CD4-positive, alpha-beta memory T cell (primary cell): ENCODE measurements at regions of chrX and their contacts with region 1.

Region 1: DNA sequence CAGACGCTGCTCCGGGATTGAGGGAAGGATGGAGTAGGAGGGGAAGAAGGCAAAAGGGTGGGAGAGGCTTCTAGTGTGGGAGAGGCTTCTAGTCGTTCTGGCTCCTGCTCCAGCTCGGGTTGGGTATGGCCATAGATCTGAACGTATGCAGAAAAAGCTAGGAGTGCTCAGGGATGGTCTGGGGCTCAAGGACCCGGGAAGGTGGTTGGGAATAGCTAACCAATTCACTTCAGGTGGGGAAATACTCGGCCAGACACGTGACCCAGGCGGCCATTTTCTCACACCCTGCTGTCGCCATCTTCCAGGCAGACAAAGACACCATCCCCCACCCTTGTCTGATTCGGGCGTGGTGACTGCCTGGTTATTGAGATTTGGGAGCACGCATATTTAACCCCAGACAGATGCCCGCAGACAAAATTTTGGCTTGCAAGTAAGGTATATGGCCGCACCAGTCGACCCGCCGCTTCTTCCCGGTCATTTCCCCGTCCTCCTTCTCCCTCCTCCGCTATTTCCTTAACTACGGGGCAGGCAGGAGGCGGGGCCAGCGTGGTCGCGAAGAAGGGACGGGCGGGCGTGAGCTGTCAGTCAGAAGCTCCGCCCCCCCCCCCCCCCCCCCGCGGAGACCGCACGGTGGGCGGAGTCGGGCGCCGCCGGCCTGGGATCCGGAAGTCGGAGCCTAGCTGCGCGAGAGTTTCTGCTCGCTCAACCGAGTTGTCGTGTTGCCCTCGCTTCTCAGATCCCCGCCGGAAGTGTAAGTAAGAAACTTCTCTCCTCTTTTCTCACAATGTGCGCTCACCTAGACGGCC is at the start of gene GNL3L:
- DNase-seq: peak; percentile 79 to 84 (median 82)
- H3K4me3 ChIP-seq: peak within 1 kb of the TSS; percentile 88 to 97
- H3K4me3 Mint-ChIP-seq: peak within 1 kb of the TSS; percentile 91 to 99 (median 95)
- H3K27ac ChIP-seq: peak within 1 kb of the TSS; percentile 73
- H3K27ac Mint-ChIP-seq: peak within 1 kb of the TSS; percentile 91 to 98 (median 96)
- H3K4me1 ChIP-seq: peaks cover 34% of the 10 kb centered on the region
- H3K4me1 Mint-ChIP-seq: peaks cover 19 to 45% (median 30%) of the 10 kb centered on the region in 4 donors
- H3K27me3 ChIP-seq: no peaks in the 10 kb centered on the region
- H3K27me3 Mint-ChIP-seq: no peaks in the 10 kb centered on the region
- total RNA-seq, gene GNL3L: 41.7 to 45.1 TPM

Region 2: DNA sequence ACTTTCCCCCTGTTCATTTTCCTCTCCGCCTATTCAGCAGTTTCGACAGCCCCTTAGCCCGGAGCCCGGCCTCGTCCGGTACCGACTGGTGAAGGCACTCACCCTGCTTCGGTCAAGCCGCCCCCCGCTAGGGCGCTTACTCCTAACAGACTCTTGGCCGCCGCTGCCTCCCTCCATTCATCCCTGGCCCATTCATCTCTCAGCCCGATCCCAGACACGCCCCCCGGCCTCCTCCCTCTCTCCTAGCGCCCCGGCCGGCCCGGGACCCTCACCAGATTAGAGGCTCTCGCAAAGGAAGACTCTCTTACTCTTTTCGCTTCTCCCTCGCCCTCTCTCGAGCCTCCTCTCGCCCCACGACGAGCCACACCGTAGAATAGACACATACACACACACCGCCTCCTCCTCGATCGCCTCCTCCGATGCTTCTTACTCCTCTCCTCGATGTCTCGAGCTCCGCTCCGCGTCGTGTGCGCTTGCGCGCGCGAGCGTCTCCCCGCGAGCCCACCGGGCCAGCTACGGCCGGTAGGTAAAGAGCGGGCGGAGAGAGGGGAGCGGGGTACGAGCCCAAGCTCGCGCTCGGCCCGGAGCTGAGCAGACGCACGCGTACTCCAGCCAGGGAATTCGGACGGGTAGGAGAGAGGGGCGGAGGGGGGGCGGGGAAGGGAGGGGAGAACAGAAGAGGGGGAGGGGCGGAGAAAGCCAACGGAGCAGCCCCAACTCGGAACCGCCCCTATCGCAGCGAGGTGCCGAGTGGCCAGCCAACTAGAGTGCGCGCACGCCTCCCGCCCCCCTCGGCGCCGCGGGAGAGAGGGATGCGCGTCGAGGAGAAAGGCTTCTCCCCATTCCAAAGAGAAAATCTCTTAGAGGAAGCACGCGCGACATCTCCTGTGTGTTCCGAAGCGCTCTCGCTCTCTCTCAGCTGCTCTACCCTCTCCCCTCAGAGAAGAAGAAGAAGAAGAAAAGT is 172.1 kb before region 1 on chrX and contains the start of gene WNK3:
- CTCF ChIA-PET with region 1: no interaction called
- POLR2A ChIA-PET with region 1: interaction called, 4 read pairs
- intact Hi-C with region 1: loop called (anchors 5 kb)
- DNase-seq: peak; percentile 23 to 36 (median 25)
- H3K4me3 ChIP-seq: peak within 1 kb of the TSS in 1 of 2 donors; percentile 28
- H3K4me3 Mint-ChIP-seq: peak within 1 kb of the TSS; percentile 70 to 89 (median 86)
- H3K27ac ChIP-seq: no peak within 1 kb of the TSS
- H3K27ac Mint-ChIP-seq: peak within 1 kb of the TSS in 6 of 7 donors; percentile 11 to 82 (median 48)
- H3K4me1 ChIP-seq: peaks cover 5% of the 10 kb centered on the region
- H3K4me1 Mint-ChIP-seq: peaks cover 6 to 16% (median 12%) of the 10 kb centered on the region in 4 donors
- H3K27me3 ChIP-seq: no peaks in the 10 kb centered on the region
- H3K27me3 Mint-ChIP-seq: peaks cover 7 to 19% of the 10 kb centered on the region in 2 donors
- total RNA-seq, gene WNK3: 0.64 to 0.81 TPM

Region 3: DNA sequence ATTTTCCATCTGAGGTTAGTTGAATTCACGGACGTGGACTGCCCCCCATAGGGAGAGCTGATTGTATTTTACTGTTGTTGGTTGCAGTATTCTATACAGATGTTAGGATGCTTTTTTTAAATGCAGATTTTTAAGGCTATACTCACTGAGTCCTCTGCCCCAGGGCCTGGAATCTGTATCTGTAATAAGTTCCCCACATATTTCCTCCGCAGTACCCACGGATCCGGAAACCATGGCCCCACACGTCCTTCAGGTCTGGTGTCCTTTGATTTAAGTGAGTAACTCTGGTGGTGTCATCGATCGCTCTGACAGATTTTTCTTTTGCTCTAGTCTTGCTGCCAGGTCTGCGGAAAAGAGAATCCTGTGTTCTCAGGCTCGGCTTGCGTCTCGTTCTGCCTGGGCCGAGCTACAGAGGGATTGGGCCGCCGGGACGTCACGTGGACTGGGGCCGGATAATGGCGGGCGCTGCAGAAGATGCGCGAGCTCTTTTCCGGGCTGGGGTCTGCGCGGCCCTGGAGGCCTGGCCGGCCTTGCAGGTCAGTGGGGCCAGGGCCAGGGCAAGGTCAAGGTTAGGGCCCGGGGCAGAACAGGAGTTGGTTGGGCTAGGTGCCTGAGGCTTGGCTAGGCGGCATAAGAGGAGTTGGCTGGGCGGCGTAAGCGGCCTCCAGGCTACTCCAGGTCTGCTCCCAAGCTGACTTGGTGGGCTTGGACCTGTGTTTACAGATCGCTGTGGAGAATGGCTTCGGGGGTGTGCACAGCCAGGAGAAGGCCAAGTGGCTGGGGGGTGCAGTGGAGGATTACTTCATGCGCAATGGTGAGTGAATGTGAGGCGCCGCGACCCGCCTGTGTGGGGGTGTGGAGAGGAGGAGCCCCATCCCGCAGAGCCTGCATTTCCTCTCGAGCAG is 89.5 kb before region 1 on chrX and contains the start of gene TSR2:
- CTCF ChIA-PET with region 1: interaction called, 3 read pairs
- POLR2A ChIA-PET with region 1: interaction called, 13 read pairs
- intact Hi-C with region 1: loop called (anchors 1 kb)
- DNase-seq: peak; percentile 76 to 88 (median 80)
- H3K4me3 ChIP-seq: peak within 1 kb of the TSS; percentile 69 to 81
- H3K4me3 Mint-ChIP-seq: peak within 1 kb of the TSS; percentile 86 to 97 (median 93)
- H3K27ac ChIP-seq: peak within 1 kb of the TSS; percentile 75
- H3K27ac Mint-ChIP-seq: peak within 1 kb of the TSS; percentile 84 to 92 (median 90)
- H3K4me1 ChIP-seq: peaks cover 26% of the 10 kb centered on the region
- H3K4me1 Mint-ChIP-seq: peaks cover 15 to 35% (median 25%) of the 10 kb centered on the region in 4 donors
- H3K27me3 ChIP-seq: no peaks in the 10 kb centered on the region
- H3K27me3 Mint-ChIP-seq: no peaks in the 10 kb centered on the region
- total RNA-seq, gene TSR2: 39.2 to 42.1 TPM

Region 4: DNA sequence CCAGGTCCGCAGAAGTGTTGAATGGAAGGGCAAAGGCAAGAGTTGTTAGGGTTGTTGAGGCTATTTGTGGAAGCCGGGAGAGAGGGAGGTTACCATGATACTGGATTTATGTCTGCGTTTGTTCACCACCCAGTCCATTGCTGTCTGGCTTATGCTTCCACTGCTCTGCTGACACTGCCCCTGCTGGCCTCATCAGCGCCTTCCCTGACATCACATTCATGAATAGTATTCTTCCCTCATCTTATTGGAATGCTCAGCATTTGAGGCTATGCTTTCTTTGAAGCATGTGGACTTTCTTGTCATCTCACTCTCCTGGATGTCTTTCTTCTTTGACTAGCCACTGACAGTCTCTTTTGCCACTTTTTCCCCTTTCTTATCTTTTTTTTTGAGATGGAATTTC is 10.5 kb after region 1 on chrX:
- CTCF ChIA-PET with region 1: no interaction called
- POLR2A ChIA-PET with region 1: no interaction called
- intact Hi-C with region 1: no loop called
- DNase-seq: no peak
- H3K4me3 ChIP-seq: no peak overlapping the region
- H3K4me3 Mint-ChIP-seq: no peak overlapping the region
- H3K27ac ChIP-seq: no peak overlapping the region
- H3K27ac Mint-ChIP-seq: peak overlapping the region in 2 of 7 donors; percentile 10 to 12
- H3K4me1 ChIP-seq: no peaks in the 10 kb centered on the region
- H3K4me1 Mint-ChIP-seq: peaks cover 0 to 3% (median under 1%) of the 10 kb centered on the region in 4 donors
- H3K27me3 ChIP-seq: no peaks in the 10 kb centered on the region
- H3K27me3 Mint-ChIP-seq: no peaks in the 10 kb centered on the region